ENCODE measurements at regions of chr1 and their contacts with region 1.

Region 1: GRCh38 chr1:84944767-84945486 is 51.9 kb upstream of the LPAR3 start:
- DNase-seq: peak in 3 of 4 donors; percentile 64 to 95 (median 91)
- ATAC-seq: peak; percentile 99
- H3K4me3 ChIP-seq: peak overlapping the region; percentile 17 to 42
- H3K27ac ChIP-seq: peak overlapping the region; percentile 65 to 81
- H3K4me1 ChIP-seq: peaks cover 2 to 14% of the 10 kb centered on the region in 2 donors
- H3K27me3 ChIP-seq: no peaks in the 10 kb centered on the region
- CTCF ChIP-seq: peak; percentile 89 to 96

Region 2: GRCh38 chr1:85033221-85033620 is 88.3 kb after region 1 on chr1:
- intact Hi-C with region 1: no loop called
- DNase-seq: no peak
- ATAC-seq: no peak
- H3K4me3 ChIP-seq: no peak overlapping the region
- H3K27ac ChIP-seq: no peak overlapping the region
- H3K4me1 ChIP-seq: no peaks in the 10 kb centered on the region
- H3K27me3 ChIP-seq: no peaks in the 10 kb centered on the region
- CTCF ChIP-seq: no peak

Region 3: DNA sequence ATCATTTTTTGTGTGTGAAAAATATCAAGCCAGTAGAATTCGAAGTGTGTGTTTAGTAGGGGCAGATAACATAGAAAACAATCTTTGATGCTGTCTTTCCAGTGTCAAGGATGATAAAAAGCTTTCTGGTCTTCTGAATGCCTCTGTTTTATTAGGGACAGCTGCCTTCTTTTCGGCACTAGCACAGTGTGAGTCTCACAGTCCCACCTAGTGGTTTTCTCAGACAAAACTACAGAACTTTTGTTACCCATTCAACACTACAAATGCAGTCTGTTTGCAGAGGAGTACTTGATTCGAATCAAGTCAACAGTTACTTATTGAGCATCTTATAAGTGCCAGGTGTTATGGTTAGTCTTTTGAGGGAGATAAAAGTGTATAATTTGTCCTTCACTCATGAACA is 134.0 kb after region 1 on chr1:
- intact Hi-C with region 1: loop called in 1 of 2 experiments (anchors 10 kb)
- DNase-seq: peak in 1 of 4 donors; percentile 25
- ATAC-seq: peak; percentile 30
- H3K4me3 ChIP-seq: no peak overlapping the region
- H3K27ac ChIP-seq: no peak overlapping the region
- H3K4me1 ChIP-seq: no peaks in the 10 kb centered on the region
- H3K27me3 ChIP-seq: no peaks in the 10 kb centered on the region
- CTCF ChIP-seq: no peak

Region 4: GRCh38 chr1:85116856-85117255 is 171.9 kb after region 1 on chr1:
- intact Hi-C with region 1: no loop called
- DNase-seq: no peak
- ATAC-seq: no peak
- H3K4me3 ChIP-seq: no peak overlapping the region
- H3K27ac ChIP-seq: no peak overlapping the region
- H3K4me1 ChIP-seq: no peaks in the 10 kb centered on the region
- H3K27me3 ChIP-seq: no peaks in the 10 kb centered on the region
- CTCF ChIP-seq: no peak

Measured in left lung (tissue), 14 donors.